Head of caudate nucleus (tissue), 42 donors: ENCODE measurements at regions of chr21 and their contacts with region 1.

Region 1: DNA sequence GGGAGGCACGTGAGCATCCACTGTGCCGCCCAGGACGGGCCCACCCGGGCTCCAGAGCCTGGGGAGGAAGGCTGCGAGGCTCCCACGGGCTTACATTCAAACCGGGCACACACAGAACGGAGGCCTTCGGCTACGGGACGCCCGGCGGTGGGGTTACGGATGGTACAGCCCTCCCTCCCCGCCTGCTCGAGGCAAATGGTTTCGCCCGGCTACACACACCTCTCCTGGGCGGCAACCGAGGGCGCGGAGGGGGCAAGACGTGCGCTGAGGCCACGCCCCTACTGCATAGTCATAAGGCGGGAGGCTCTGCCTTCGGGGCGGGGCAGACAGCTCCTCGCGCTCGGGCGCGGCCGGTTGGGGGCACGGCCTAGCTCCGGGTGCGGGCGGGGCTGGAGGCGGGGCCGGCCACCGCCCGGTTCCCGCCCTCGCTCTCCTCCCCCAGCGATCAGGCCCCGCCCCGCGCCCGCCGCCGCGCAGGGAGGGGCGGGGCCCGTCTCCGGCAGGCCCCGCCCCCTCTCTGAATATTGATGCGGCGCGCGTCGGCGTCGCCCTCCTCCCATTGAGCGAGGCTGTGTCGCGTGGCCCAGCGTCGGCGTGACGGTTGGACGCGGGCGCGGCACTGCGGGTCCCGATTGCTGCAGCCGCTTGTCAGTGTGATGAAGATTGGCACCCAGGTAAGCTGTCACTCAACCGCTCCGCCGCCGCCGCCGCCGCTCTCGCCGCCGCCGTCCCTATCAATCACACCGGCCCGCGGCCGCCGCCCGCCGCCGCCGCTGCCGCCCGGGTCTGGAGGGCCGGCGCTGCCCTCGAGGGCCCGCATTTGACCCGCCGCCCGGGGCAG is at the start of gene PKNOX1:
- DNase-seq: peak; percentile 94 to 100 (median 99)

Region 2: GRCh38 chr21:42887326-42887725 is 86.9 kb before region 1 on chr21:
- intact Hi-C with region 1: loop called (anchors 10 kb)
- DNase-seq: no peak

Region 3: GRCh38 chr21:42925114-42925907 is 48.9 kb before region 1 on chr21 and contains the start of gene ERVH48-1:
- intact Hi-C with region 1: loop called (anchors 5 kb)
- DNase-seq: no peak

Region 4: DNA sequence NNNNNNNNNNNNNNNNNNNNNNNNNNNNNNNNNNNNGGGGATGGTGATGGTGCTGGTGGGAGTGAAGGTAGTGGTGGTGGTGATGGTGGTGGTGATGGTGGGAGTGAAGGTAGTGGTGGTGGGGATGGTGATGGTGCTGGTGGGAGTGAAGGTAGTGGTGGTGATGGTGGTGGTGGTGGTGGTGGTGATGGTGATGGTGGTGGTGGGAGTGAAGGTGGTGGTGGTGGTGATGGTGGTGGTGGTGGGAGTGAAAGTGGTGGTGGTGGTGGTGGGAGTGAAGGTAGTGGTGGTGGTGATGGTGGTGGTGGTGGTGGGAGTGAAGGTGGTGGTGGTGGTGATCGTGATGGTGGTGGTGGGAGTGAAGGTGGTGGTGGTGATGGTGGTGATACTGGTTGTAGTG is 288.2 kb after region 1 on chr21:
- intact Hi-C with region 1: no loop called
- DNase-seq: no peak